Calu3 (cell line): ENCODE measurements at regions of chr5 and their contacts with region 1.

Region 1: GRCh38 chr5:171336521-171337209 is 27.6 kb downstream of the TLX3 start:
- DNase-seq: peak; percentile 68
- H3K4me3 Mint-ChIP-seq: peak overlapping the region; percentile 70
- H3K27ac Mint-ChIP-seq: no peak overlapping the region
- H3K4me1 Mint-ChIP-seq: no peaks in the 10 kb centered on the region
- H3K27me3 Mint-ChIP-seq: peaks cover 22% of the 10 kb centered on the region
- CTCF ChIP-seq: peak; percentile 80

Region 2: GRCh38 chr5:169997798-169998197 is 1338.9 kb before region 1 on chr5:
- CTCF ChIA-PET with region 1: no interaction called
- intact Hi-C with region 1: no loop called
- DNase-seq: no peak
- H3K4me3 Mint-ChIP-seq: no peak overlapping the region
- H3K27ac Mint-ChIP-seq: no peak overlapping the region
- H3K4me1 Mint-ChIP-seq: no peaks in the 10 kb centered on the region
- H3K27me3 Mint-ChIP-seq: peaks cover 99% of the 10 kb centered on the region
- CTCF ChIP-seq: no peak

Region 3: GRCh38 chr5:170691657-170692056 is 645.0 kb before region 1 on chr5:
- CTCF ChIA-PET with region 1: no interaction called
- intact Hi-C with region 1: loop called (anchors 2 kb)
- DNase-seq: peak; percentile 51
- H3K4me3 Mint-ChIP-seq: no peak overlapping the region
- H3K27ac Mint-ChIP-seq: no peak overlapping the region
- H3K4me1 Mint-ChIP-seq: no peaks in the 10 kb centered on the region
- H3K27me3 Mint-ChIP-seq: peaks cover 94% of the 10 kb centered on the region
- CTCF ChIP-seq: peak; percentile 16

Region 4: GRCh38 chr5:170986598-170986997 is 350.1 kb before region 1 on chr5:
- CTCF ChIA-PET with region 1: no interaction called
- intact Hi-C with region 1: loop called (anchors 5 kb)
- DNase-seq: no peak
- H3K4me3 Mint-ChIP-seq: no peak overlapping the region
- H3K27ac Mint-ChIP-seq: no peak overlapping the region
- H3K4me1 Mint-ChIP-seq: no peaks in the 10 kb centered on the region
- H3K27me3 Mint-ChIP-seq: no peaks in the 10 kb centered on the region
- CTCF ChIP-seq: no peak

Region 5: GRCh38 chr5:171272996-171273970 is 63.4 kb before region 1 on chr5:
- CTCF ChIA-PET with region 1: interaction called, 4 read pairs
- intact Hi-C with region 1: loop called (anchors 1 kb)
- DNase-seq: peak; percentile 36
- H3K4me3 Mint-ChIP-seq: no peak overlapping the region
- H3K27ac Mint-ChIP-seq: no peak overlapping the region
- H3K4me1 Mint-ChIP-seq: peaks cover 31% of the 10 kb centered on the region
- H3K27me3 Mint-ChIP-seq: no peaks in the 10 kb centered on the region
- CTCF ChIP-seq: peak; percentile 49